Activated CD4-positive, alpha-beta T cell treated with anti-CD3 and anti-CD28 coated beads for 36 hours (primary cell): ENCODE measurements at regions of chr14 and their contacts with region 1.

Region 1: DNA sequence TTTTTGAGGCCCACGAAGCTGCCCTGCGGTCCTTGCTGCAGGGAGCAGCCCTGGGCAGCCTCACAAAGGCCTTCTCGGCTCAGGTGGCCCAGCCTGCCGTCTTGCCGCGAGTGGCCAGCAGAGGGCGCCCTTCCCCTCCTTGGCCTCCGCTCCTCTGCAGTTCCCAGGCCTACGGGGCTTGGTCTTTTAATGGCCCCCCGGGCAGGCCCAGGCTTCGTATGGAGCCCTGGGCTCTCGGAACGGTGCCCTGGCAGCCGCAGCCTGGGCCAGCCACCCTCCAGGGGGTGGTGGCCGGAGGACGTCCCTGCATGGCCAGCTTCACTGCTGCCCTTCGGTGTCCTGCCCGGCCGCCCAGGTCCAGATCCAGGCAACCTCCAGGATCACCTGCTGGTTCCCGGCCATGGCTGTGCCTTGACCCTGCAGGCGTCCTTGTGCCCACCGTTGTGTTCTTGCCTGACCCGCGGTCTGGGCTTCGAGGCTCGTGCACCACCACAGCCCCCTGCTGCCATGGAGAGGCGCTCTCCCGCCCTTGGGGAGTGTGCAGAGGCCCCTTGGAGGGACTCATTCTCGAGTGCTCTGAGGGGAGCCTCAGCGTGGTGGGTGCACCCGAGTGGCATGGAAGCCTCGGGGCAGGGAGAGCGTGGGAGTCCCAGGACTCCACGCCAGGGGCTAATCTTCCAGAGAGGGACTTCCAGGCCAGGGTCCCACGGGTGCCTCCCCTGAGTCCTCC is 9.4 kb downstream of the ASPG start:
- DNase-seq: peak; percentile 89
- ATAC-seq: peak; percentile 91
- H3K4me3 Mint-ChIP-seq: no peak overlapping the region
- H3K27ac Mint-ChIP-seq: no peak overlapping the region
- H3K4me1 Mint-ChIP-seq: peaks cover 5% of the 10 kb centered on the region
- H3K27me3 Mint-ChIP-seq: no peaks in the 10 kb centered on the region

Region 2: DNA sequence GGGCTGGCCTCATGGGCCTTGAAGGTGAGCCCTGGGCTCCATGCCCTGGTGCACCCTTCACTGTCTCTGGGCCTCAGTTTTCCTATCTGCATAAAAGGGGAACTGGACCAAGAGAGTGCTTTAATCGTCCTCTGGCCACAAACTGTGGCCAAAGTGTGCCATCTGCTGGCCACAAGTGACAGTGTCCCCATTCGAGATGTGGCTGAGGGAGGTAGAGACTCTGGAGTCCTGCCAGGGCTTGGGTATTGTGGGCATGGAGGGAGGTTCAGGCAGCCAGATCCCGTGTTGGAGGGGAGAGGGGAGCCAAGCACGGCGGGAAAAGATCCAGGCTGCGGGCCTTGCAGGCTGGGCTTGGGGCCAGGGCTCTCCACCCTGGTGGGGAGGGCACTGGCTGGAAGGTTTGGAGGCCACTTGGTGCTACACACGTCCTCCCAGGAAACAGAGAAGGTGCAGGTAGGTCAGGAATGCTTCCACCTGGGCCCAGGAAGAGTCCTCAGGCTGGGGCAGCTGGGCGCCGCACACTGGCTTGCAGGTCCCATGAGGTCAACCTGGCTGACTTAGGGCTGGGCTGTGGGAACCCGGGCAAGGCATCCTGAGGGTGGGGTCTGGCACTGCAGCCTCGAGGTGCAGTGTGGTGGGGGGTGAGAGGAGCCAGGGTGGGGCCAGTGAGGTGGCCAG is 36.2 kb after region 1 on chr14:
- CTCF ChIA-PET with region 1: interaction called, 9 read pairs
- POLR2A ChIA-PET with region 1: no interaction called
- intact Hi-C with region 1: loop called in 1 of 2 experiments (anchors 1 kb)
- DNase-seq: peak; percentile 41
- ATAC-seq: no peak
- H3K4me3 Mint-ChIP-seq: no peak overlapping the region
- H3K27ac Mint-ChIP-seq: no peak overlapping the region
- H3K4me1 Mint-ChIP-seq: no peaks in the 10 kb centered on the region
- H3K27me3 Mint-ChIP-seq: peaks cover 37% of the 10 kb centered on the region

Region 3: DNA sequence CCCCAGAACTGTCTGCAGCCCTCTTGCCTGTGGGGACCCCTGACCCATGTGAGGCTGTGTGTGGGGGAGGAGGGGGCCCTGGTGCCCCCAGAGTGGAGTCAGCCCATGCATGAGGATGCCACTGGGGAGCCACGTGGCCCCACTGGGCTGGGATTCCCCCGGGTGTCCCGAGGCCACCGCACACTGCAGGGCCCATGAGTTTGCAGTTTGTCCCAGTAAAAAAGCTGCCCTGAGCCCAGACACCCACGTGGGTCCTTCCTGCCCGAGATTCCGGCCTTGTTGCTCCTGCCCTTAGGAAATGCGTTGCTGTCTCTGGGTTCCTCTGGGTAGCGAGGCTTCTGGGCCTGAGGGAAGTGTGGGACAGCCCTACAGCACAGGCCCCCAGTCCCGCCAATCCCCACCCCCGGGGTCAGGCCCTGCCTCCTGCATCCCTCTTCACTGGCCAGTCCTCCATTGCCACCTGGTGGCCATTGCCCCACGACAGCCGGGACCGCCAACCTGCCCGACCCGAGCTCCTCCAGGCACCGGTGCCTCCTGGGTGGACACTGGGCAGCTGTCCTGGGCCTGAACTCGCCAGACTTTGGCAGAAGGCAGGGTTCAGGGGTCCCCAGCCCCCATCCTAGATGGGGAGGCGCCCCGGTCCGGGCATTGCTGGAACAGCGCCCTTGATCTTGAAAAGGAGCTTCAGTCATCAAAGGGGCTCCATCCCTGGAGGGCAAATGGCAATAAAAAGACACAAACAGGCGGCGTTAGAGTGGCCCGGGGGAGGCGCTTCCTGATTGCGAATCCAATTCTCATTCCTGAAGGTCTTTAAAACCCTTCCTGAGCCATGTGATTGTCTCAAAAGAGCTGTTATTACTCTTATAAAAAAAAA is 469.1 kb after region 1 on chr14:
- CTCF ChIA-PET with region 1: interaction called, 3 read pairs
- POLR2A ChIA-PET with region 1: no interaction called
- intact Hi-C with region 1: loop called in 1 of 2 experiments (anchors 2 kb)
- DNase-seq: peak; percentile 82
- ATAC-seq: peak; percentile 60
- H3K4me3 Mint-ChIP-seq: no peak overlapping the region
- H3K27ac Mint-ChIP-seq: no peak overlapping the region
- H3K4me1 Mint-ChIP-seq: no peaks in the 10 kb centered on the region
- H3K27me3 Mint-ChIP-seq: peaks cover 7% of the 10 kb centered on the region

Region 4: GRCh38 chr14:104898870-104899510 is 804.1 kb after region 1 on chr14:
- CTCF ChIA-PET with region 1: no interaction called
- POLR2A ChIA-PET with region 1: no interaction called
- intact Hi-C with region 1: no loop called
- DNase-seq: no peak
- ATAC-seq: no peak
- H3K4me3 Mint-ChIP-seq: no peak overlapping the region
- H3K27ac Mint-ChIP-seq: no peak overlapping the region
- H3K4me1 Mint-ChIP-seq: peaks cover 3% of the 10 kb centered on the region
- H3K27me3 Mint-ChIP-seq: peaks cover 3% of the 10 kb centered on the region